ENCODE measurements at regions of chr1 and their contacts with region 1.

Region 1: DNA sequence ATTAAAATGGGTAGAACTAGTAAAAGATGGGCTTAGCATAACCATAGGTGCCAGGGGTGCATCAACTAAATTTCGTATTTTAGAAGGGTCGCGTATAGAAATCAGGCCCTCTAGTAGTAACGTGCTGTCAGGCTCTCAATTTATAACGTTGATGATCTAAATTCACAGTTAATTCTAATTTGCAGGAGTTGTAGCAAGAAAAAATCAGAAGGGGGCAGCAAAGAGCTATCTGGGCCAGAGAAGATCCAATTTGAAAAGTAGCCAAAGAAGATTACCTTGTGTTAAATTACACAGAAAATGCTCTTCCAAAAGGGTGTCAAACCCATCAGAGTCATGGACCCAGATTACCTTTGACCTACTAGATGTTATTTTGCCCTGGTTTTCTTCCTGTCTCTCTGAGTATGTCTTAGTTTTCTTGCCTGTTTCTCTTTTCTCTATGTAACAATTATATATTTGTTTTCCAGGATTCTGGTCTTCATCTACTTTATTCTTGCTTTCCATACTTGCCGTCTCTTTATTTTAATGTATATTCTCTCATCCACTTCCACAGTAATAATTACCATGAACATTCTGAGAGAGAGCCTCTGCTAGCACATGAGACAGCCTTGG is 1030.9 kb downstream of the AMY1C start:
- DNase-seq: no peak
- ATAC-seq: no peak
- H3K4me3 ChIP-seq: no peak overlapping the region
- H3K27ac ChIP-seq: no peak overlapping the region
- H3K4me1 ChIP-seq: no peaks in the 10 kb centered on the region
- H3K27me3 ChIP-seq: no peaks in the 10 kb centered on the region
- CTCF ChIP-seq: peak in 2 of 3 experiments; percentile 54 to 56; a peak in 4 of 6 replicates
- POLR2A ChIP-seq: no peak
- RAD21 ChIP-seq: peak; percentile 32; the same call in 1 of the 2 replicates

Region 2: DNA sequence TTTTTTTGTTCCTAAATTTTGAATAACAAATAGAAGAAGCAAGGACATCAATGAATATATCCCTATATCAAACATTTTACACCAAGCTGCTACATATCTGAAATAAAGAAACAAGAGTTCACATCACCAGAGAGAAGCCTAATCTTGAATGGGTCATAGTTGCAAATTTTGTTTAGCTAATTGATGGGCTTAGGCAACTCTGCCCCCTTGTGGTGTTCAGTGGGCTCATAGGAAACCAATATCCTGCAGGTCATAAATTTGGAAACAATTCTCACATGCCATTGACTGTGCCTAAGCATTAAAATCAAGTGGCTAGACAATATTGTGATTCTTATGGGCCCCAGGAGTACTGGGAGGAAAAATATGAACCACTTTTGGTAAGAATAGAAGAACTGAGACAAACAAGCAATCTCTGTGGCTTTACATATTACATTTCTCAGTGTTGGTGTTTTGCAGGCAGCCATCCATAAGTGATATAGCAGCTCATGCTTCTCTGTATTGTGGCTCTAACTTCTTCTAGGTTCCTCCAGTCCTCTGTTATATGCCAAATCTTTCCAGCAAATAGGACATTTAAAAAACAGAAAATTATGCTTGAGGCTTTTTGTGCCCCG is 1013.1 kb after region 1 on chr1:
- CTCF ChIA-PET with region 1: no interaction called
- POLR2A ChIA-PET with region 1: no interaction called
- RAD21 ChIA-PET with region 1: no interaction called
- intact Hi-C with region 1: loop called (anchors 5 kb)
- DNase-seq: no peak
- ATAC-seq: no peak
- H3K4me3 ChIP-seq: no peak overlapping the region
- H3K27ac ChIP-seq: no peak overlapping the region
- H3K4me1 ChIP-seq: no peaks in the 10 kb centered on the region
- H3K27me3 ChIP-seq: no peaks in the 10 kb centered on the region
- CTCF ChIP-seq: peak in 2 of 3 experiments; percentile 26 to 40; a peak in 3 of 6 replicates
- POLR2A ChIP-seq: no peak
- RAD21 ChIP-seq: 0 out of 2 replicates have a peak, but pooled peaks have one; percentile 16